Mammary epithelial cell (primary cell): ENCODE measurements at regions of chr18 and their contacts with region 1.

Region 1: GRCh38 chr18:36899289-36899688 is 70.4 kb downstream of the KIAA1328 start:
- DNase-seq: peak; percentile 26
- H3K4me3 ChIP-seq: no peak overlapping the region
- H3K27ac ChIP-seq: no peak overlapping the region
- H3K4me1 ChIP-seq: no peaks in the 10 kb centered on the region
- H3K27me3 ChIP-seq: no peaks in the 10 kb centered on the region
- CTCF ChIP-seq: peak; percentile 29 to 44

Region 2: DNA sequence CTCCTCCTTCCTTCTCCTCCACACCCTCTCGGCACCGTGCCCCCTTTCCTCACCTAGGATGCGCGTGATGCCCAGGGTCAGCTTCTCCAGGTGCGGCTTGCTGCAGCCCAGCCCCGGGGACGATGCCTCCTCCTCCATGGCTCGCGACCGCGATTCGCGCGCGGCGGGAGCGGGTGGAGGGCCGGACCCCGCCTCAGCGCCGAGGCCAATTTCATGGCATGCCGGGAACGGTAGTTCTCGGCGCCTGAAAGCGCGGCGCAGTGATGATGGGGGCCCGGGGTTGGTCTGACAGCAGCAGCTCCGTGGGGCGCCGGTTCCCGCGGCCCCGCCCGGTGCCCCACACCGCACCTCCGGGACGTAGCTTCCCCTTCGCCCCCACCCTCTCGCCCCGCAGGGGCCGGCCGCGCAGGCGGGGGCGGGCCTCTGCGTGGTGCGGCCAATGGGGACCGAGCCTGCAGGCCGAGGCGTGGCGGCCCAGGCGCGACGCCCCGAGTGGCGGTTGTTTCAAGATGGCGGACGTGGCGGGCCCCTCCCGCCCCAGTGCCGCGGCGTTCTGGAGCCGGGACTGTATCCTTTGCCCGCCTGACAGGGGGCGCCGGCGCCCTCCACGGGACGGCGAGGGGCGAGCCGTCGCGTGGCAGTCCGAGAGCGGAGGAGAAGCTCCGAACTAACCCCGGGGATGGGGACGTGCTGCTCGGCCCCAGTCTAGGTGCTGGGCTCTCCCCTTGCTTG is 70.5 kb before region 1 on chr18 and contains the starts of genes KIAA1328 and TPGS2:
- CTCF ChIA-PET with region 1: interaction called, 3 read pairs
- dilution Hi-C with region 1: no loop called
- in situ Hi-C with region 1: no loop called
- intact Hi-C with region 1: loop called (anchors 1 kb)
- DNase-seq: peak; percentile 87
- H3K4me3 ChIP-seq: peak within 1 kb of the TSS; percentile 79 to 100 (median 99)
- H3K27ac ChIP-seq: peak within 1 kb of the TSS; percentile 85
- H3K4me1 ChIP-seq: peaks cover 9% of the 10 kb centered on the region
- H3K27me3 ChIP-seq: no peaks in the 10 kb centered on the region
- CTCF ChIP-seq: peak; percentile 16 to 50
- total RNA-seq, gene KIAA1328: 7.7 to 9.0 TPM
- total RNA-seq, gene TPGS2: 117 to 125 TPM